Calu3 (cell line): ENCODE measurements at regions of chr18 and their contacts with region 1.

Region 1: GRCh38 chr18:63439334-63439733 is 17.1 kb upstream of the VPS4B start:
- DNase-seq: peak; percentile 51
- H3K4me3 Mint-ChIP-seq: no peak overlapping the region
- H3K27ac Mint-ChIP-seq: no peak overlapping the region
- H3K4me1 Mint-ChIP-seq: no peaks in the 10 kb centered on the region
- H3K27me3 Mint-ChIP-seq: no peaks in the 10 kb centered on the region
- CTCF ChIP-seq: peak; percentile 86

Region 2: GRCh38 chr18:62852851-62853250 is 586.5 kb before region 1 on chr18:
- CTCF ChIA-PET with region 1: no interaction called
- intact Hi-C with region 1: no loop called
- DNase-seq: no peak
- H3K4me3 Mint-ChIP-seq: no peak overlapping the region
- H3K27ac Mint-ChIP-seq: no peak overlapping the region
- H3K4me1 Mint-ChIP-seq: peaks cover 18% of the 10 kb centered on the region
- H3K27me3 Mint-ChIP-seq: no peaks in the 10 kb centered on the region
- CTCF ChIP-seq: no peak

Region 3: GRCh38 chr18:63016270-63016669 is 423.1 kb before region 1 on chr18:
- CTCF ChIA-PET with region 1: interaction called, 3 read pairs
- intact Hi-C with region 1: loop called (anchors 2 kb)
- DNase-seq: peak; percentile 56
- H3K4me3 Mint-ChIP-seq: no peak overlapping the region
- H3K27ac Mint-ChIP-seq: no peak overlapping the region
- H3K4me1 Mint-ChIP-seq: no peaks in the 10 kb centered on the region
- H3K27me3 Mint-ChIP-seq: no peaks in the 10 kb centered on the region
- CTCF ChIP-seq: peak; percentile 86

Region 4: GRCh38 chr18:63131106-63131958 is 308.0 kb before region 1 on chr18:
- CTCF ChIA-PET with region 1: no interaction called
- intact Hi-C with region 1: loop called (anchors 1 kb)
- DNase-seq: peak; percentile 56
- H3K4me3 Mint-ChIP-seq: no peak overlapping the region
- H3K27ac Mint-ChIP-seq: no peak overlapping the region
- H3K4me1 Mint-ChIP-seq: no peaks in the 10 kb centered on the region
- H3K27me3 Mint-ChIP-seq: peaks cover 21% of the 10 kb centered on the region
- CTCF ChIP-seq: peak; percentile 51

Region 5: GRCh38 chr18:63339920-63340484 is 99.3 kb before region 1 on chr18:
- CTCF ChIA-PET with region 1: no interaction called
- intact Hi-C with region 1: loop called (anchors 5 kb)
- DNase-seq: peak; percentile 24
- H3K4me3 Mint-ChIP-seq: no peak overlapping the region
- H3K27ac Mint-ChIP-seq: no peak overlapping the region
- H3K4me1 Mint-ChIP-seq: peaks cover 14% of the 10 kb centered on the region
- H3K27me3 Mint-ChIP-seq: no peaks in the 10 kb centered on the region
- CTCF ChIP-seq: peak; percentile 49

Region 6: GRCh38 chr18:63367053-63367953 is 72.0 kb before region 1 on chr18 and contains the start of gene KDSR:
- CTCF ChIA-PET with region 1: interaction called, 8 read pairs
- intact Hi-C with region 1: loop called (anchors 5 kb)
- DNase-seq: peak; percentile 97
- H3K4me3 Mint-ChIP-seq: peak within 1 kb of the TSS; percentile 89
- H3K27ac Mint-ChIP-seq: peak within 1 kb of the TSS; percentile 85
- H3K4me1 Mint-ChIP-seq: peaks cover 8% of the 10 kb centered on the region
- H3K27me3 Mint-ChIP-seq: no peaks in the 10 kb centered on the region
- CTCF ChIP-seq: no peak
- total RNA-seq, gene KDSR: 53.3 and 59.3 TPM in 2 replicates

Region 7: DNA sequence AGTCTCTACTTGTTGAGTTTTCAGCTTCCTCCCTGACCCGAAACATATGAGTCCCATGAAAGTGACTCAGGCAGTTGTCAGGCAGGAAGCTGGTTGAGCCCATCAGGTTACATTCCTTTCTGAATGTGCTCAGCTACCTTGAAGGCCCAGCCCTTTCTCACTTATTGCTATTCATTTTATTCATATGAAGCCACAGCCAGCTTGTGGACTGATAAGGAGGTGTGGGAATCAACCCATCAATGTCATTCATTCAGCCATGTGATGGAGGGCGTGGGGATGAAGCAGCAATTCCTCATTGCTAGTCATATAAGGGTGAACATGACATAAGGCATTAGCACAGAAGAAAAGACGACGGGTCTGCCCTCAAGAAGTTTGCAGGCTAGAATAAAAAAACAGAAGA is 11.8 kb before region 1 on chr18:
- CTCF ChIA-PET with region 1: interaction called, 22 read pairs
- intact Hi-C with region 1: no loop called
- DNase-seq: peak; percentile 73
- H3K4me3 Mint-ChIP-seq: no peak overlapping the region
- H3K27ac Mint-ChIP-seq: peak overlapping the region; percentile 83
- H3K4me1 Mint-ChIP-seq: peaks cover 24% of the 10 kb centered on the region
- H3K27me3 Mint-ChIP-seq: no peaks in the 10 kb centered on the region
- CTCF ChIP-seq: no peak